ENCODE measurements at regions of chr7 and their contacts with region 1.

Region 1: GRCh38 chr7:107592361-107593024 is 12.4 kb downstream of the BCAP29 start:
- DNase-seq: no peak
- ATAC-seq: no peak; the same call in 2 of the 3 replicates
- H3K4me3 ChIP-seq: no peak overlapping the region
- H3K27ac ChIP-seq: no peak overlapping the region
- H3K4me1 ChIP-seq: no peaks in the 10 kb centered on the region
- H3K27me3 ChIP-seq: no peaks in the 10 kb centered on the region
- CTCF ChIP-seq: no peak
- EP300 ChIP-seq: no peak
- POLR2A ChIP-seq: no peak
- RAD21 ChIP-seq: no peak

Region 2: GRCh38 chr7:107579885-107580715 is 12.4 kb before region 1 on chr7 and contains the start of gene BCAP29:
- CTCF ChIA-PET with region 1: no interaction called
- POLR2A ChIA-PET with region 1: interaction called, 12 read pairs
- in situ Hi-C with region 1: no loop called
- intact Hi-C with region 1: no loop called
- DNase-seq: peak; percentile 94 to 95 (median 95)
- ATAC-seq: peak; percentile 94
- H3K4me3 ChIP-seq: peak within 1 kb of the TSS; percentile 62
- H3K27ac ChIP-seq: peak within 1 kb of the TSS; percentile 83
- H3K4me1 ChIP-seq: peaks cover 6 to 13% of the 10 kb centered on the region in 2 experiments; a peak in 4 of 5 replicates
- H3K27me3 ChIP-seq: no peaks in the 10 kb centered on the region
- CTCF ChIP-seq: peak; percentile 55 to 64 (median 60)
- EP300 ChIP-seq: peak; percentile 43
- POLR2A ChIP-seq: peak; percentile 92
- RAD21 ChIP-seq: peak; percentile 63 to 65
- polyA plus RNA-seq, gene BCAP29: 63.4 to 64.4 TPM